Breast epithelium (tissue), 4 donors: ENCODE measurements at regions of chr7 and their contacts with region 1.

Region 1: GRCh38 chr7:115561335-115562110 is 469.0 kb downstream of the TFEC start:
- DNase-seq: no peak
- H3K4me3 ChIP-seq: no peak overlapping the region
- H3K27ac ChIP-seq: no peak overlapping the region
- H3K4me1 ChIP-seq: no peaks in the 10 kb centered on the region
- H3K27me3 ChIP-seq: no peaks in the 10 kb centered on the region
- CTCF ChIP-seq: no peak
- POLR2A ChIP-seq: no peak

Region 2: DNA sequence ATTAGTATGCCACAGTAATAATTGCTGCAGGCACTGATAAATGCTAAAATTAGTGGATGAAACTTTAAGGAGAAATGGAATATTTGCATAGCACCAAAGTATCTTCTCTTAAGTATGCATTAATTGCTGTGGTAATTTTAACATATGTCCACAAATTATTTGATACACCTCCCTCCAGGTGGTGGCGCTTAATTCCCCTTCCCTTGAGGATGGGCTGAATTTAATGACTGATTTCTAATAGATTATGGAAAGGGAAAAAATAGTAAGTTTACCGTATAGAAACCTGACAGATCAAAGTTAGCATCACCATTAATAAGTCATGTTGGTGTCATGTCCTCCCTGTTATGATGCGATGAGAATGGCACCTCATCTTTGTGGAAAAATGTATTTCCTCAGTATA is 50.2 kb before region 1 on chr7:
- intact Hi-C with region 1: loop called (anchors 2 kb)
- DNase-seq: no peak
- H3K4me3 ChIP-seq: no peak overlapping the region
- H3K27ac ChIP-seq: no peak overlapping the region
- H3K4me1 ChIP-seq: no peaks in the 10 kb centered on the region
- H3K27me3 ChIP-seq: no peaks in the 10 kb centered on the region
- CTCF ChIP-seq: no peak
- POLR2A ChIP-seq: no peak

Region 3: DNA sequence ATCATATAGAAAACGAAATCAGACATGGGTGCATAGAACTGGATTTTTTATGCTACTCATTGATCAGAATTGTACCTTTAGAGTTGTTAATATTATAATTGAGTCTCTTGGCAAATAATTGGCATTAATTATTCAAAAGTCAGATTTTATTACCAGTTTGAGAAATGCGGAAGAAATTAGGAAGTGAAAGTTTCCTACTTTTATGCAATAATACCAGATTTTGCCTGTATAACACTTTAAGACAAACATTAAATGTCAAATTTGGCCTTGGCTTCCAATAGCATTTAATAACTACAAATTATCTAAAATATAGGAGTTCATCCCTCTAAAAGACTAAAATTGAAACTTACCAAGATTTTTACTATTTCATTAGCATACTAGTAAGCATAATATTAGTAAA is 475.9 kb after region 1 on chr7:
- intact Hi-C with region 1: loop called (anchors 5 kb)
- DNase-seq: no peak
- H3K4me3 ChIP-seq: no peak overlapping the region
- H3K27ac ChIP-seq: no peak overlapping the region
- H3K4me1 ChIP-seq: no peaks in the 10 kb centered on the region
- H3K27me3 ChIP-seq: no peaks in the 10 kb centered on the region
- CTCF ChIP-seq: no peak
- POLR2A ChIP-seq: no peak

Region 4: DNA sequence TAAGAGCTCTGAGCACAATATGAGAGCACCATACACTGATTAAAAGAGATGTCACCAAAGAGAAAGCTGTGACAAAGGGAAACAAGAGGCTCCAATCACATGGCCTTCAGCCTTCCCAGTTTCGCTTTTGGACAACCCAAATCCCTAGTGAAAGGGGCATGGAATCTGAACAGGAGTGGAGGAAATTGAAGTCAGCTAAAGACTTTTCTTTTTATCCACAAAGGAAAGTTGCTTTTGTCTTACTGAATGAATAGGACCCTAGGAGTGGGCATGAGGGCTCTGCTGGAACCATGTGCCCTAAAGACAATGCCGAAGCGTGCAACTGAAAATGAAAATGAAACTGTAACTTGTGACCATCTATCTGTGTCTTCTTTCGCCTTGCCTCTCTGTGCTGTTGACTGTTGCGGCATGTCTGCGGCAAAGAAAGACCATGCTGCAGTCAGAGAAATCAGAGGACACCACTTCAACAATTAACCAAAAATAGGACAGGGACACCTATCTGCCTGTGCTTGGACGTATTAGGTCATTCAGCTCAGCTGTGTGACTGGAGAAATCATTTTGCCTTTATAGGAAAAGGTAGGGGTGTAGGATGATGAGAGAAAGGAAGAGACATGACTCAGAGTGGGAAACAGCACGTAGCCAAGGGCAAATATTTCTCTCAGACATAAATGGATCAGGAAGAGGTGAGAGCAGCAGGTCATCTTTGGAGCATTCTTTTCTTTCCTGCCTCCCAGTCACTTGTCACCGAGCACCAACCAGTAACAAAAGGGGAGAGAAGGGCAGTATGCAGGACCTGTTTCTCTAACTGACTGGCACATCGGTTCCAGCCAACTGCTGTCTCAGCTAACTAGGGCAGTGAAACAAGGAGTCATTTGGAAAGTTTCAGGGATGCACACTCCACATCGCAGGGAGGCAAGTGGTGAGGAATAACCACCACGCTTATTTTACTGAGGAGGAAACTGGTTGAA is 950.3 kb after region 1 on chr7:
- intact Hi-C with region 1: no loop called
- DNase-seq: peak in 1 of 2 donors; percentile 47
- H3K4me3 ChIP-seq: peak overlapping the region; percentile 35 to 66 (median 55)
- H3K27ac ChIP-seq: peak overlapping the region; percentile 86
- H3K4me1 ChIP-seq: no peaks in the 10 kb centered on the region
- H3K27me3 ChIP-seq: no peaks in the 10 kb centered on the region
- CTCF ChIP-seq: no peak
- POLR2A ChIP-seq: no peak